ENCODE measurements at regions of chr1 and their contacts with region 1.

Region 1: DNA sequence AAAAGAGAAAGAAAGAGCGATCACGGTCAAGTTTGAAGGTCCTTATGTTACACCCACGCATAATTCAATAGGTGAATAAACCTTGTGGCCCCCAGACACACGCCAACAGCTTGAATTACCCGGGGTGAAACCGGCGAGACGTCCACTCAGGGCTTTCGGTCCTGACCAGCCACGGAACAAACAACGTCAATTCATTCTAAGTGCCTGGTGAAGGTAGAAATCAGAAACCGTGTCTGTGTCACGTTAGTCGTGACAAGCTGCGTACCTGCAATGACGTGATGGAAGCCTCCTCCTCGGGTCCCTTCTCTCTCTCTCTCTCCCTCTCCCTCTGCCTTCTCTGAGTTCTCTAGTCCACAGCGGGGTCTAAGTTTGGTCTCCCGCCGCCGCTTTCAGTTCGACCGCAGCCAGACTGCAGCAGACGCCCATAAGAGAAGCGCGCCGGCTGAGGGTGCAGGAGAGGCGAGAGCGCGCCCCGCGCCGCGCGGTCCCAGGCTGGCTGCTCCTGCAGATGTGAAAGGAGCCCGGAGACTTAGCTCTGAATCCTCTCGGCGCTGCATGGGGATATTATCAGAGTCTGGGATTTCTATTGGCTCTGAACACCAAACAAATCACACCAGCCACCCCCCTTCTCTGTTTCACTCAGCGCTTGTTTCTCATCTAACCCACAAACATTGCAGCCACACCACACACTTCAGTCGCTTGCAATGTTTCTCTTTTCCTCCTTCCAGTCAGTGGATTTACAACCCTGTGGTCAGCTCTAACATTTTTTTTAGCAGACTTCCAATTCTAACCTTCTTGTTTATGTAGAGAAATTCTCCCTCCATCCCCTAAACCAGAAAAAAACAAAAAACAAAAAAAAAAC is at the start of gene GREM2:
- DNase-seq: peak; percentile 31
- H3K4me3 Mint-ChIP-seq: peak within 1 kb of the TSS; percentile 95
- H3K27ac Mint-ChIP-seq: peak within 1 kb of the TSS; percentile 71
- H3K4me1 Mint-ChIP-seq: peaks cover 32% of the 10 kb centered on the region
- H3K27me3 Mint-ChIP-seq: peaks cover 38% of the 10 kb centered on the region
- total RNA-seq, gene GREM2: 0.05 TPM in 2 replicates

Region 2: DNA sequence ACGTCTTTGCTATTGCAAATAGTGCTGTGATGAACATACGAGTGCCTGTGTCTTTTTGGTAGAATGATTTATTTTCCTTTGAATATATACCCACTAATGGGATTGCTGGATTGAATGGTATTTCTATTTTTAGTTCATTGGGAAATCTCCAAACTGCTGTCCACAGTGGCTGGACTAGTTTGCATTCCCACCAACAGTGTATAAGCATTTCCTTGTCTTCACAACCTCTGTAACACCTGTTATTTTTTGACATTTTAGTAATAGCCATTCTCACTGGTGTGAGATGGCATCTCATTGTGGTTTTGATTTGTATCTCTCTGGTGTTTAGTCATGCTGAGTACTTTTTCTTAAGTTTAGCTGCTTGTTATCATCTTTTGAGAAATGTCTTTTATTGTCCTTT is 305.2 kb before region 1 on chr1:
- intact Hi-C with region 1: no loop called
- DNase-seq: no peak
- H3K4me3 Mint-ChIP-seq: no peak overlapping the region
- H3K27ac Mint-ChIP-seq: no peak overlapping the region
- H3K4me1 Mint-ChIP-seq: no peaks in the 10 kb centered on the region
- H3K27me3 Mint-ChIP-seq: no peaks in the 10 kb centered on the region

Region 3: DNA sequence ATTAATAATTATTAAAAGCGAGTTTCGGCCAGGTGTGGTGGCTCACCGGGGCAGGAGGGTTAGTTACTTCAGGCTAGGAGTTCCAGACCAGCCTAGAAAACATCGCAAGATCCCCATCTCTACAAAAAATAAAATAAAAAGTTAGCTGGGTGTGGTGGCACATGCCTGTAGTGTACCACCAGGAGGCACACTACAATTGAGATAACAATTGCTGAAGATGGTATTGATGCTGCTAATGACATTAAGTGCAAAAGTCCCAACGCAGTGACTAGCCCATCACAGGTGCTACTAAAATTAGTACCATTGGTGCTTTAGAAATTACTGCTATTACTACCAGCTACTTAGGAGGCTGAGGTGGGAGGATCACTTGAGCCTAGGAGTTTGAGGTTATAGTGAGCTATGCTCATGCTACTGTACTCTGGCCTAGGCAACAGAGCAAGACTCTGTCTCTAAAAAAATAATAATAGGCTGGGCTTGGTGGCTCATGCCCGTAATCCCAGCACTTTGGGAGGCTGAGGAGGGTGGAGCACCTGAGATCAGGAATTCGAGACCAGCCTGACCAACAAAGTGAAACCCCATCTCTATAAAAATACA is 156.5 kb before region 1 on chr1:
- intact Hi-C with region 1: loop called (anchors 5 kb)
- DNase-seq: no peak
- H3K4me3 Mint-ChIP-seq: no peak overlapping the region
- H3K27ac Mint-ChIP-seq: no peak overlapping the region
- H3K4me1 Mint-ChIP-seq: no peaks in the 10 kb centered on the region
- H3K27me3 Mint-ChIP-seq: no peaks in the 10 kb centered on the region

Region 4: DNA sequence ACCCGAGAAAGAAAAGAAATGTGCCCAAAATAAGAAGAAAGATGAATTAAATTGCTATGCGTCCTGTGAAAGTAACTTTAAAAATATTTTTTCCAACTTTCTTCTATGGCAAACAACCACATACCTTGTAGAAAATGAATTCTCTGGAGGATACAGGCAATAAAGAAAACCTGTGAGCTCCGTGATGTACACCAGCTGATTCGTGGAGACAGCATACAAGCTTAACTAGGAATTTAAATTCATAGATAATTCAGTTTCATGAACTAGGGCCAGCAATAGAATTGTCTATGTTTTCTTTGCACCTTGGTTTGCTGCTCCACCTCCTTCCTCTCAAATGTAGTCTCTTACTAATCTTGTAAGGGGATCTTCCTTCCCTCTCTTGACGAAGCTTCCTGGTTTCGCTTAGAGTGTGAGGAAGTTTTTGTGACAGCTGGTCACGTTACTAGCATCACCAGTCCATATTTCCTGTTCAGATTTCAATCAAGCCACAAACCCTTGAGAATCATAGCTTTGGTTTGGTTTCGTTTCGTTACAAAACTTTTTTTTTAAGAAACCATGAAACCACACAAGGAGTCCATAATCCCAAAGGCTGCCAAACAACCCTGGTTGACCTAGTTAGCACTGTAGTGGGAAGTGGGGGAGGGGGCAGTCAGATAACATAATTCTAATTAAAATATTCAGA is 35.7 kb before region 1 on chr1:
- intact Hi-C with region 1: loop called (anchors 2 kb)
- DNase-seq: peak; percentile 27
- H3K4me3 Mint-ChIP-seq: no peak overlapping the region
- H3K27ac Mint-ChIP-seq: no peak overlapping the region
- H3K4me1 Mint-ChIP-seq: peaks cover 15% of the 10 kb centered on the region
- H3K27me3 Mint-ChIP-seq: peaks cover 2% of the 10 kb centered on the region